ENCODE measurements at regions of chr6 and their contacts with region 1.

Region 1: GRCh38 chr6:139250296-139251044 is 41.3 kb downstream of the TXLNB start:
- DNase-seq: peak; percentile 38 to 73
- ATAC-seq: peak; percentile 59 to 84
- H3K4me3 ChIP-seq: peak overlapping the region in 1 of 4 donors; percentile 16
- H3K27ac ChIP-seq: peak overlapping the region; percentile 71 to 84 (median 82)
- H3K4me1 ChIP-seq: peaks cover 24 to 25% of the 10 kb centered on the region in 2 donors
- H3K27me3 ChIP-seq: no peaks in the 10 kb centered on the region
- CTCF ChIP-seq: peak; percentile 42 to 84 (median 73)
- POLR2A ChIP-seq: no peak

Region 2: GRCh38 chr6:139080255-139080920 is 170.1 kb before region 1 on chr6:
- in situ Hi-C with region 1: no loop called
- intact Hi-C with region 1: no loop called
- DNase-seq: peak; percentile 24 to 31
- ATAC-seq: peak; percentile 90 to 99
- H3K4me3 ChIP-seq: no peak overlapping the region
- H3K27ac ChIP-seq: peak overlapping the region; percentile 50 to 80 (median 70)
- H3K4me1 ChIP-seq: peaks cover 12 to 17% of the 10 kb centered on the region in 2 donors
- H3K27me3 ChIP-seq: no peaks in the 10 kb centered on the region
- CTCF ChIP-seq: no peak
- POLR2A ChIP-seq: no peak

Region 3: DNA sequence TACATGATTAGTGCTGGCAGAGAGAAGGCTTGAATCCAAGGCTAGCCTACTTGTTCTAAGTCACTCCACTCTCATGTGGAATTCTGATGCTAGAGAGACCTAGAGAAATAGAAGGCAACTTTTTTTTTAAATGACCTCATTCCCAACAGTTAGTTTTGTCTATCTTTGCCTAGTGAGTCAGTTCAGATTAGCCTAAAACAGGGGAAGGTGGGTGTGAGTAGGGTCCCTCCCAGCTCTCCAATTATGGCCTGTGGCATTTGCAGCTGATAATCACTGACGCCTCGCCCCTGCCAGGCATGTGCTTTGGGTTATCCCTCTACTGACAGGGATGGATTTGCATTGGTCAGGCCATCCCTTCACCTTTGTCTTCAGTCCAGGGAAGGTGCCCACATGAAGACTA is 27.7 kb after region 1 on chr6:
- in situ Hi-C with region 1: no loop called
- intact Hi-C with region 1: loop called (anchors 1 kb)
- DNase-seq: no peak
- ATAC-seq: no peak
- H3K4me3 ChIP-seq: no peak overlapping the region
- H3K27ac ChIP-seq: peak overlapping the region; percentile 82 to 90 (median 88)
- H3K4me1 ChIP-seq: peaks cover 48 to 55% of the 10 kb centered on the region in 2 donors
- H3K27me3 ChIP-seq: no peaks in the 10 kb centered on the region
- CTCF ChIP-seq: no peak
- POLR2A ChIP-seq: no peak

Region 4: DNA sequence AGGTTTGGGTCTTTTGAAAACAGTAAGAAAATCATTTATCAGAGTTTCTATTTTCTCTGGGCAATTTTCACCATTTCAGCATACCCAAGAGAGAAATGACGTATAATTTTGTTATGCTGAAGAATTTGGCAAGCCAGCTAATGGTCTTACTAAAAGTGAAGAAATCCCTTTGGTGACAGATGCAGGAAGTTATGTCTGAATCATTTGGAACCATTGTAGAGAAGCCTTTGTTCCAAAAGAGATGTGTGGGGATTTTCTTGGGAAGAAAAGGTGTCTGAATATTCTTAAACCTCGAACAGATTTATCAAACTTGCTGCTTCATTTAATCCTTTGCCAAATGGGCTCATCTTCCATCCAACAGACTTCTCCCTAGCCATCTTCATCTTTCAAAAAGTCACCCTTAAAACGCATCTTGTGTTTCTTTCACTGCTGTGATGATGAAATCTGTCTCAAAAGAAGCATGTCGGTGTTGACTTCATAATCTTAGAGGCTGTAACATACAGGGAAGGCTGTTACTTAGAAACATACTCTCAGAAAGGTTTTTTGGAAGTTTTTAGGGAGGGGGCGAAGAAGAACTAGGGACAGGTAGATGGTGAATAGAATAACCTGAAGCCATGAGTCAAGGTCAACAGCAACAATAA is 84.5 kb after region 1 on chr6:
- in situ Hi-C with region 1: no loop called
- intact Hi-C with region 1: loop called (anchors 5 kb)
- DNase-seq: peak in 1 of 2 donors; percentile 23
- ATAC-seq: peak; percentile 49 to 53
- H3K4me3 ChIP-seq: no peak overlapping the region
- H3K27ac ChIP-seq: peak overlapping the region; percentile 26 to 69 (median 52)
- H3K4me1 ChIP-seq: peaks cover 14 to 43% of the 10 kb centered on the region in 2 donors
- H3K27me3 ChIP-seq: no peaks in the 10 kb centered on the region
- CTCF ChIP-seq: no peak
- POLR2A ChIP-seq: no peak

Measured in gastrocnemius medialis (tissue), 4 donors.